CD8-positive, alpha-beta memory T cell (primary cell): ENCODE measurements at regions of chr19 and their contacts with region 1.

Region 1: DNA sequence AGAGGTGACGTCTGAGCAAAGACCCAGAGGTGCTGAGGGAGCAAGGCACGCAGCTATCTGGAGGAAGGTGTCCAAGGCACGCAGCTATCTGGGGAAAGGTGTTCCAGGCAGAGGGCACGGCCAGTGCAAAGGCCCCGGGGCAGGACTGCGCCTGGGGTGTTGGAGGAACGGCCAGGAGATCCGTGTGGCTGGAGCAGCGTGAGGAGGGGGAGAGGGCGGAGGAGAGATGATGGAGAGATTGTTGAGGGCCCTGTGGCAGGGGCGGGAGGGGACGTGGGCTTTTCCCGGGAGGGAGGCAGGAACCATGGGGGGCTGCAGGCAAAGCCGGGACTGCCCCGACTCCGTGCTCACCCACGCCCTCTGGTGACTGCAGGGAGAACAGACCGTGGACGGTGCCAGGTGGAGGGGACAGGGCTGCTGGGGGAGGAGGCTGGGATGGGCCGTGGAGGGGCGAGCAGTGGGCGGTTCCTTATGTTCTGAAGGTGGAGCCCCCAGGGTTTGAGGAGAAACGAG is 13.3 kb upstream of the MISP start:
- DNase-seq: peak; percentile 33 to 69 (median 44)
- H3K4me3 ChIP-seq: no peak overlapping the region
- H3K4me3 Mint-ChIP-seq: no peak overlapping the region
- H3K27ac ChIP-seq: no peak overlapping the region
- H3K27ac Mint-ChIP-seq: peak overlapping the region in 1 of 8 donors; percentile 89
- H3K4me1 ChIP-seq: no peaks in the 10 kb centered on the region
- H3K4me1 Mint-ChIP-seq: peaks cover 5 to 11% (median 5%) of the 10 kb centered on the region in 3 donors
- H3K27me3 ChIP-seq: no peaks in the 10 kb centered on the region
- H3K27me3 Mint-ChIP-seq: peaks cover 4% of the 10 kb centered on the region in 2 donors

Region 2: GRCh38 chr19:584240-585001 is 153.2 kb before region 1 on chr19:
- CTCF ChIA-PET with region 1: interaction called, 13 read pairs
- POLR2A ChIA-PET with region 1: no interaction called
- DNase-seq: peak; percentile 58 to 70 (median 59)
- H3K4me3 ChIP-seq: no peak overlapping the region
- H3K4me3 Mint-ChIP-seq: no peak overlapping the region
- H3K27ac ChIP-seq: no peak overlapping the region
- H3K27ac Mint-ChIP-seq: no peak overlapping the region
- H3K4me1 ChIP-seq: peaks cover 16% of the 10 kb centered on the region
- H3K4me1 Mint-ChIP-seq: peaks cover 4 to 13% (median 6%) of the 10 kb centered on the region in 3 donors
- H3K27me3 ChIP-seq: peaks cover 12% of the 10 kb centered on the region
- H3K27me3 Mint-ChIP-seq: peaks cover 6 to 12% of the 10 kb centered on the region in 2 donors